ENCODE measurements at regions of chr9 and their contacts with region 1.

Region 1: DNA sequence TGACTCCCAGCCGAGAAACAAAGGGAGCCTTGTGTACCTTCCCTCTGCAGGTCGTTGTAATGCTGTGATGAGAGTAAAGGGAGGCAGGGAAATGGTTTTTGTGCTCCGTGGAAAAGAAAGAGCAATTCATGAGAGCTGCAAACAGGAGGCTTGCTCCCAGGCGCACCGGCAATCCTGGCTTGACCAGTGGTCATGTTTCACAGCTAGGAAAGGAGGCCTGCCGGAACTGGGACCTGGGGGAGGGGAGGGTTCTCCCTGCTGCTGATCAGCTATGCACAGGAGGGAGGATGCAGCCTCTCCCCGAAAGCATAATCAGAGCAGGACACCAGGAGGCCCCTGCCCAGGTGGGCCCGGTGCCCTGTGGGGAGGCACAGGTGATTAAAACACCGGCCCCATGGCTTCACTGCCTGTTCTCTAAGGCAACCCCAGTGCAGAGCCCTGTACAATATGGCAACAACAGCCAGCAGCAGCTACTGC is 131.3 kb downstream of the ZDHHC21 start:
- DNase-seq: no peak
- H3K4me3 Mint-ChIP-seq: no peak overlapping the region
- H3K27ac Mint-ChIP-seq: no peak overlapping the region
- H3K4me1 Mint-ChIP-seq: peaks cover 9% of the 10 kb centered on the region
- H3K27me3 Mint-ChIP-seq: peaks cover 5% of the 10 kb centered on the region

Region 2: DNA sequence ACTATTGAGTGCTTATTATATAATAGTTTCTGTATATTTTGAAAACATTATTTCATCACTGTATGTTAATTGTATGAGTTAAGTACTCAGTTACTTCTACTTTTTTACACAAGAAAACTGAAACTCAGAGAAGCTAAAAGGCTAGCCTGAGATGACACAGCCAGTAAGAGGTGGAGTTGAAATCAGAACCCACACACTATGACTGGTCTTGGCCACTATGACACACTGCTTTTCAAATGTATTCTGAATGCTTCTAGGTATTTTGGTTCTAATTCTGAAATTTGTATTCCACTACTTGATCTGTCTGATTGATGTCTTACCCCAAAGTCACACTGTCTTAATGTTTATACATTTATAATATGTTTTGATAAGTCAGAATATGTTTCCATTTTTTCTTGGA is 50.5 kb before region 1 on chr9:
- intact Hi-C with region 1: loop called (anchors 2 kb)
- DNase-seq: no peak
- H3K4me3 Mint-ChIP-seq: no peak overlapping the region
- H3K27ac Mint-ChIP-seq: no peak overlapping the region
- H3K4me1 Mint-ChIP-seq: no peaks in the 10 kb centered on the region
- H3K27me3 Mint-ChIP-seq: no peaks in the 10 kb centered on the region

Region 3: DNA sequence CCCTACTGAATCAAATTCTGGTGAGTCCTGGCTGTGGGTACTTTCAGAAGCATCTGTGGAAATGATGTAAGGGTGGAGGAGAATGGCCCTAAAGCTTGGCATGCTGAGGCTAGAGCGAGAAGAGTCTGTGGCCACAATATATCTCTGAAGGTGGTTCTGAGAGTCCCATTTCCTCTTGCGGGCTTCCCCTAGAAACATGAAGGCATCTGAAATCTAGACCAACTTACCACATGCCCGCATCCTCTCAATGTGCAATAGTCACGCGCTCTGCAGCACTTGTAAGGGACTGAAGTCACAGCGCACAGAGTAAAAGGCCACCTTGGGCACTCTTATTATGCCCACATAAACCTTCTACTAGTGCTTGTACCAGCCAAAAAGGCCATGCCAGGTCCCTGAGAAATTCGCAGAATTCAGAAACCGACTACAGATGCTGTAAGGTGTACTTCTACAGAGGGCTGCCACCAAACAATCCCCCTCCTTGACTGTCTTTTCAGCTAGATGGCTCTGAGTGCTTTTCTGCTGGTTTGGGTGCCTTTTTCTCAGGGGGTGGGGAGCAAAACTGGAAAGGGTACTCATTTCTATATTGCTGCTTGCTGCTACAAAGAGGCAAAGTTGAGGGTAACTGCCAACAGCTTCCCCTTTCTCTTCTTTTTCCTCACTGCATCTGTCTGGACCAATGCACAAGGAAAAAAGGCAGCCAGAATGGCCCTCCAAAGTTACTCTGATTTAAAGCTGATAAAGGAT is 23.9 kb after region 1 on chr9:
- intact Hi-C with region 1: loop called (anchors 1 kb)
- DNase-seq: peak; percentile 11
- H3K4me3 Mint-ChIP-seq: no peak overlapping the region
- H3K27ac Mint-ChIP-seq: no peak overlapping the region
- H3K4me1 Mint-ChIP-seq: peaks cover 10% of the 10 kb centered on the region
- H3K27me3 Mint-ChIP-seq: peaks cover 19% of the 10 kb centered on the region

Region 4: GRCh38 chr9:14670718-14671117 is 108.8 kb after region 1 on chr9:
- intact Hi-C with region 1: loop called (anchors 5 kb)
- DNase-seq: no peak
- H3K4me3 Mint-ChIP-seq: no peak overlapping the region
- H3K27ac Mint-ChIP-seq: peak overlapping the region; percentile 62
- H3K4me1 Mint-ChIP-seq: peaks cover 10% of the 10 kb centered on the region
- H3K27me3 Mint-ChIP-seq: no peaks in the 10 kb centered on the region

Region 5: GRCh38 chr9:16074963-16075362 is 1513.0 kb after region 1 on chr9:
- intact Hi-C with region 1: no loop called
- DNase-seq: no peak
- H3K4me3 Mint-ChIP-seq: no peak overlapping the region
- H3K27ac Mint-ChIP-seq: no peak overlapping the region
- H3K4me1 Mint-ChIP-seq: no peaks in the 10 kb centered on the region
- H3K27me3 Mint-ChIP-seq: no peaks in the 10 kb centered on the region

Measured in activated T-helper 2 cell treated with anti-CD3 and anti-CD28 coated beads, Interferon-gamma antibody, Interleukin-2, Interleukin-4, amounts not matched to agents 10 μg/mL and 5 μg/mL and 100 μg/mL, durations not matched to agents 14 hours and 24 hours and 36 hours (primary cell).